RWPE1 (cell line): ENCODE measurements at regions of chr20 and their contacts with region 1.

Region 1: DNA sequence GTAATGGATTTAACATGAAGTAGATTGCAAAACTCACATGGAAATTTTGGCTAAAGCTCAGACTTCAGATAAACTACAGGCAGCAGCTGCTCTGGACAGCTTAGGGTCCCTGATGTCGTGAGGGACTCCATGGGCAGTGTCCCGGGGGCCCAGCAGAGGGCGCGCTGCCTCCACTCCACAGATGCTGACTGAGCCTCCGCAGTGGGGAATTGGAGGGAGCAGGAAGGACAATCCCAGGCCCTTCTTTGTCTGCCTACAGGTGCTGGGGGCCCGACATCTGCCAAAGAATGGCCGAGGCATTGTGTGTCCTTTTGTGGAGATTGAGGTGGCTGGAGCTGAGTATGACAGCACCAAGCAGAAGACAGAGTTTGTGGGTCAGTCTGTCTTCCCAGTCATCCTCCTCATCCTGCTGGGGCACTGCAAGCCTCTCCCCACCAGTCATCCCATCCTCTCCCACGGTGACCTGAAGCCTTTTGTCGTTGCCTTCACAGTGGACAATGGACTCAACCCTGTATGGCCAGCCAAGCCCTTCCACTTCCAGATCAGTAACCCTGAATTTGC is 35.9 kb downstream of the PLCG1 start:
- DNase-seq: peak; percentile 91
- H3K27ac ChIP-seq: peak overlapping the region; percentile 76
- CTCF ChIP-seq: peak; percentile 99

Region 2: DNA sequence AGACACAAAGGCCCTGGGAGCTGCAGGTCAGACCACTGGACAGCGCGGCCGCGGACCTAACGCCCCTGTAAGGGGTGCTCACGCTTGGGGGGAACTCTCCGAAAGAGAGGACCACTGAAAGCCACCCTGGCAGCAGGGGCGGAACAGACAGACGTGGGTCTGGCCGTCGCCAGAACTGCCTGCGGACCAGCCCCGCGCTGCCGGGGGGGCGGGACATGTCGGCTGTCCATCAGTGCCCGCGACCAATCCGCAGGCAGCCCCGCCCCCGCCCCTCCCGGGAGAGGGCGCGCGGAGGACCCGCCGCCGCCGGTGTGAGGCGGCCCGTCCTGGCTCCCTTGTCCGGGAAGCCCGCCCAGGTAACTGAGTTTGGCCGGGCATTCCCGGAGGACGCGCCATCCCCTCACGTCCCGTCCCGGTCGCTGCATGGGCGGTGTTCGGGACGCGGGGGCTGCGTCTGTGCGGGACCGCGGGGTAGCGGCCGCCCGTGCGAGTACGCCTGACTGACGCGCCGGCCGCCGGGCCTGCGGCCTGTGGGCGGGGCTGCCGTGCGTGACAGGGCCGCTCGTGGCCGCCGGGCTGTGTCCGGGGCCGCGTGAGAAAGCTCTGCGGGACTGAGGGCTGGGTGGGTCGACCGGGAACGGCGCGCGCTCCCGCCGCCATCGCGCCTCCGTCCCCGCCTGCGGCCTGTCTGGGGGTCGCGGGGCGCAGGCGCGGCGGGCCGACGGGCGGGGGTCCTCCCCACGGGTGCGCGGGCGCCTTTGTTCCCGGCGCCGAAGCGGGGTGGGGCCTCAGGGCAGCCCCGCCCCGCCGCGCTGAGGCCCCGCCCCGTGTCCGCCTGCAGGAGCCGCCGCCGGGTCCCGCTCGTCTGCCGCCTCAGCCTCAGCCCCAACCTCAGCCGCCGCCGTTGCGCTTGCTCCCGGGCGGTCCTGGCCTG is 36.3 kb before region 1 on chr20 and contains the start of gene PLCG1:
- CTCF ChIA-PET with region 1: interaction called, 21 read pairs
- POLR2A ChIA-PET with region 1: no interaction called
- DNase-seq: peak; percentile 99
- H3K27ac ChIP-seq: peak within 1 kb of the TSS; percentile 91
- CTCF ChIP-seq: no peak

Region 3: GRCh38 chr20:41161886-41162285 is 11.4 kb before region 1 on chr20:
- CTCF ChIA-PET with region 1: interaction called, 10 read pairs
- POLR2A ChIA-PET with region 1: no interaction called
- DNase-seq: no peak
- H3K27ac ChIP-seq: peak overlapping the region; percentile 12; the same call in 1 of the 2 replicates
- CTCF ChIP-seq: no peak

Region 4: DNA sequence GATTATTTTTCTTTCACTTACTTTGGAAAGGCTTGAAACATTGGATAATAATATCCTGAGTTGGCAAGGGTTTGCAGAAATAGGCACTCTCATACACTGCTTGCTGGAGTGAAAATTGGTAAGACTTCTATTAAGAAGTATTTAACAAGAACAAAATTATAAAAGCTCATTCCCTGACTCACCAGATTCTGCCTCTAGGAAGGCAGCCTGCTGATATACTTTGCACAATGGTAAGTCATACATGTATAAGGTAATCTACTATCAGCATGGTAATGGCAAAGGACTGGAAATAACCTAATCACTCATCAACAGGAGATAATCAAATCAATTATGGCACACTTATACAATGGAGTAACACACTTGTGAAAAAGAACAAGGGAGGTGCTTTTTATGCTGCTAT is 49.9 kb after region 1 on chr20:
- CTCF ChIA-PET with region 1: interaction called, 10 read pairs
- POLR2A ChIA-PET with region 1: no interaction called
- DNase-seq: no peak
- H3K27ac ChIP-seq: no peak overlapping the region
- CTCF ChIP-seq: no peak

Region 5: DNA sequence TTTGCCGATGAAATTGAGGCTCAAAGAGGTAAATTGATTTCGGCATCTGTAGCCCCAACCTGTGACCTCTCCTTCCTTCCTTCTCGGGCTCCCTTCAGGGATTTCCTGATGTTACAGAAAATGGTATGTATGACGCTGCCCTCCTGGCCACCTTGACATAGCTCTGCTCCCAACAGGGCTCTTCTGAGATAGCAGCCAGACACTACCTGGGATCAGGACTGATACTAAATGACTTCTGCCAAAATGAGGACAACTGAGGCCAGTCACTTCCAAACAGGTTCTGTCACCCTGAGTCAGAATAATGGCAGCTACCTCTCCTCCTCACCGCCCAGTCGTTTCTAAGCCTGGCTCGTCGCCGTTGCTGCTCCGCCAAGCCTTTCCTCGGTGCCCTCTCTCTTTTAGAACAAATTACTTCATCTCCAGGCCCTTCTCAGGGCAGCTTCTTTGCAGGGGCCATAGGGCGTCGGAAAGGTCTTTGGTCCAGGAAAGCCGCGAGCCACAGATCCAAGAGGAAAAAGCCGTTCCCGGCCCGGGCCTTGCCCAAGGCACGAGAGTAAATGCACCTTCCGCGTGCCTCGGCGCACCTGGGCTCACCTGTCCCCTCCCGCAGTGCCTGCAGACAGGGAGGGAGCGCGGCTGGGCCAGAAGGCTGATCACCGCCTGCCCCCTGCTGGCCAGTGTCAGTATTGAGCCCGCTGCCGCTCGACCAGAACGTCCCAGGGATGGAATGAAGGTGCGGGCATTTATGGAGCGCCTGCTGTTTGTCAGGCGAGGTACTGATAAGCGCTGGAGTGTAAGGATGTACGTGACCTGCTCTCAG is 166.5 kb after region 1 on chr20:
- CTCF ChIA-PET with region 1: interaction called, 96 read pairs
- POLR2A ChIA-PET with region 1: interaction called, 3 read pairs
- DNase-seq: peak; percentile 95
- H3K27ac ChIP-seq: peak overlapping the region; percentile 83
- CTCF ChIP-seq: peak; percentile 100

Region 6: GRCh38 chr20:41395667-41396664 is 222.7 kb after region 1 on chr20:
- CTCF ChIA-PET with region 1: no interaction called
- POLR2A ChIA-PET with region 1: no interaction called
- DNase-seq: no peak
- H3K27ac ChIP-seq: no peak overlapping the region
- CTCF ChIP-seq: no peak

Region 7: GRCh38 chr20:41572010-41572560 is 398.8 kb after region 1 on chr20:
- CTCF ChIA-PET with region 1: no interaction called
- POLR2A ChIA-PET with region 1: no interaction called
- DNase-seq: no peak
- H3K27ac ChIP-seq: no peak overlapping the region
- CTCF ChIP-seq: no peak